ENCODE measurements at regions of chr13 and their contacts with region 1.

Region 1: GRCh38 chr13:59519819-59520218 is 643.9 kb downstream of the DIAPH3 start:
- DNase-seq: no peak
- ATAC-seq: no peak
- H3K4me3 ChIP-seq: no peak overlapping the region
- H3K27ac ChIP-seq: no peak overlapping the region
- H3K4me1 ChIP-seq: no peaks in the 10 kb centered on the region
- H3K27me3 ChIP-seq: no peaks in the 10 kb centered on the region

Region 2: GRCh38 chr13:59447846-59448620 is 71.8 kb before region 1 on chr13:
- intact Hi-C with region 1: loop called in 1 of 4 experiments (anchors 10 kb)
- DNase-seq: no peak
- ATAC-seq: no peak
- H3K4me3 ChIP-seq: no peak overlapping the region
- H3K27ac ChIP-seq: no peak overlapping the region
- H3K4me1 ChIP-seq: no peaks in the 10 kb centered on the region
- H3K27me3 ChIP-seq: no peaks in the 10 kb centered on the region

Region 3: DNA sequence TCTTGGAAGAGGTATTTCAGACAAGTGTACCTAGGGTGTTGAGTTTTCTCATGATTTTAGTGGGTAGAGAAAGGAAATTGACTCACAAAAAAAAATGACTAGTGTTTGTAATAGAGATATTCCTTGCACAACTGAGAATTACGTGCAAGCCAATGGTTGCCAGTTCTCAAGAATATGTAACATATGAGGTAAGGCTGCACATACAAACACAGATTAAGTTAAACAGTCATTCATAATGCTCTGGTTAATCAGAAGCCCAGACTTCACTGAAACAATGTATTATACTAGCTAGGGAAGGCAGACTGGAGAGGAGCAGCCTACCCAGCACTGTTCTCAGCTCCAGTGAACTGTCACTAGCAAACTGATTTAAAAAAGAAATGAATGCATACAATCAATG is 225.6 kb after region 1 on chr13:
- intact Hi-C with region 1: no loop called
- DNase-seq: no peak
- ATAC-seq: no peak
- H3K4me3 ChIP-seq: no peak overlapping the region
- H3K27ac ChIP-seq: no peak overlapping the region
- H3K4me1 ChIP-seq: no peaks in the 10 kb centered on the region
- H3K27me3 ChIP-seq: no peaks in the 10 kb centered on the region